Pancreas (tissue), 10 donors: ENCODE measurements at regions of chr11 and their contacts with region 1.

Region 1: GRCh38 chr11:128824191-128825049 is 42.7 kb downstream of the KCNJ1 start:
- DNase-seq: no peak
- ATAC-seq: peak in 1 of 4 donors; percentile 33
- H3K4me3 ChIP-seq: peak overlapping the region in 1 of 4 donors; percentile 23
- H3K27ac ChIP-seq: no peak overlapping the region
- H3K4me1 ChIP-seq: no peaks in the 10 kb centered on the region
- H3K27me3 ChIP-seq: no peaks in the 10 kb centered on the region
- CTCF ChIP-seq: no peak

Region 2: GRCh38 chr11:128172046-128172878 is 652.2 kb before region 1 on chr11:
- intact Hi-C with region 1: loop called in 2 of 3 experiments (anchors 5 to 10 kb)
- DNase-seq: peak; percentile 41 to 80 (median 60)
- ATAC-seq: peak; percentile 82 to 97 (median 94)
- H3K4me3 ChIP-seq: no peak overlapping the region
- H3K27ac ChIP-seq: no peak overlapping the region
- H3K4me1 ChIP-seq: peaks cover 0 to 4% (median 0%) of the 10 kb centered on the region in 3 donors
- H3K27me3 ChIP-seq: peaks cover 0 to 4% (median 0%) of the 10 kb centered on the region in 4 donors
- CTCF ChIP-seq: peak; percentile 29 to 65 (median 58)

Region 3: DNA sequence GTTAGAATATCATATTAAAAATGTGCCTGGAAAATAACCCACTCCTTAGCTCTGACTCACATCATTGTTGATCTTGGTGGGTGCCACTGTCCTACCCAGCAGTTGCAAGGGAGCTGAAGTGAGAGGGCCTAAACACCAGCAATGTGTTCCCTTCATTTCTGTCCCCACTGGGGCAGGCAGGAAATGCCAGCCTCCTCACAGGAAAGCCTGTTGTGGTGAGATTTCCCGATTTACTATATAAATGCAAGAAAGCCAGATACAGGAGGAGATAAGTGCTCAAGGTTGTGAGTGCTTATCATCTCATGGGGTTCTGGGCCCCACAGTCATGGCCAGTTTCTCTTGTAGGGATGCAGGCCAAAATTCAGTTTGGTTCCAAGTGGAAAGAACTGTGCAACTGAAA is 146.4 kb before region 1 on chr11:
- intact Hi-C with region 1: no loop called
- DNase-seq: no peak
- ATAC-seq: no peak
- H3K4me3 ChIP-seq: no peak overlapping the region
- H3K27ac ChIP-seq: no peak overlapping the region
- H3K4me1 ChIP-seq: no peaks in the 10 kb centered on the region
- H3K27me3 ChIP-seq: no peaks in the 10 kb centered on the region
- CTCF ChIP-seq: no peak

Region 4: DNA sequence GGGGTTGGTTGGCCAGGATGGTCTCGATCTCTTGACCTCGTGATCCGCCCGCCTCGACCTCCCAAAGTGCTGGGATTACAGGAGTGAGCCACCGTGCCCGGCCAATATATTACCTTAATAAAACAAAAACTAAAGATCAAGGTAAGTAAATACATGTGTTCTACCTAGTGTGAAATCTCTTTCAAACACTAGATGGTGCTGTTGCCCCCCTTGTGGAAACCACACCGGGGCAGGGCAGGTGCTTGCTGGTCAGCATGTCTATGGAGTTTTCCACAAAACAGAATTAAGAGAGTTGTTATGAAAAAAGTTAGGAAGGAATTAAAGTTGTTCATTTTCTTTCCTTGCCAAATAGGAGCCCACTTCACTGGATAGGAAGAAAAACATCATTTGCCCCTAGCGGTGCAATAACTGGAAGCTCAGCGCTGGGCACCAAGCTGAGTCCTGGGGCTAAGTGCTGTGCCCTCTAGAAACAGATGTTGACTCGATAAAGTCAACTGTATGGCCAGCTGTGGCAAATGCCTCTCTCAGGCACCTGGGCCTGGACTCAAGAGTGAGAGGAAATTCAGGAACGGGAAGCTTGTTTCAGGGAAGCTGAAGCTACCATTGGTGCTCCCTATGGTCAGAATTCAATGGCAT is 60.4 kb after region 1 on chr11:
- intact Hi-C with region 1: no loop called
- DNase-seq: peak in 4 of 6 donors; percentile 60 to 81 (median 68)
- ATAC-seq: peak; percentile 78 to 84 (median 78)
- H3K4me3 ChIP-seq: no peak overlapping the region
- H3K27ac ChIP-seq: no peak overlapping the region
- H3K4me1 ChIP-seq: peaks cover 12 to 28% (median 18%) of the 10 kb centered on the region in 3 donors
- H3K27me3 ChIP-seq: no peaks in the 10 kb centered on the region
- CTCF ChIP-seq: peak; percentile 73 to 89 (median 82)

Region 5: DNA sequence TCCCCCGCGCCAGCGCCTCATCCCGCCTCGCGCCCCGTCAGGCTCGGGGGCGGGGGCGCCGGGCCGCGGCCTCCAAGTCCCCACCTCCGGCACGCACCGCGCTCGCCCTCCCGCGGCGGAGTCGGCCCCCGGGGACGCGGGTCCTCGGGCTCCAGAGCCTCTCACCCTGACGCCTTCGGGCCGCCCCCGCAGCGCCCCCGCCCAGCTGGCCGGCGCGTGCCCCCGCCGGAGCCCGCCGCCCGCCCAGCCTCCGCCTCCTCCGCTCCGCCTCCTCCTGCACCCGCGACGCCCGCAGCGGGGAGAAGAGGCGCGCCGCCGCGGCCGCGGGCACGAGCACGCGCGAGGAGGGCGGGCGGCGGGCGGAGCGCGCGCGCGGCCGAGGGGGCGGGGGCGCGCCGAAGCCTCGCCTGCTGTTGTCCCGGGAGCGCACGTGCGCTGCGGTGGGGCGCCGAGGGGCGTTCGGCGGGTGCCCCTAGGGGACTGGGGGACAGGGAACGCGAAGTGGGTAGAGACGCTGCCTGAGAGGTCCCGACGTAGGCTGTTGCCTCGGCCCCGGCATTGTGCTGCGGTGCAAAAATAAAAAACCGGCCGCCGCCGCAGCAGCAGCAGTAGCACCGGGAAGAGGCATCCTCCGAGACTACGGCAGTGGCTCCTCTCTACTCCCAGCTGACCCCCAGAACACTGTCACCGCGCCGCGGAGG is 455.1 kb after region 1 on chr11:
- intact Hi-C with region 1: no loop called
- DNase-seq: peak; percentile 75 to 95 (median 84)
- ATAC-seq: peak; percentile 80 to 92 (median 87)
- H3K4me3 ChIP-seq: peak overlapping the region; percentile 31 to 62 (median 52)
- H3K27ac ChIP-seq: peak overlapping the region in 2 of 4 donors; percentile 34 to 39
- H3K4me1 ChIP-seq: peaks cover 12 to 44% (median 26%) of the 10 kb centered on the region in 3 donors
- H3K27me3 ChIP-seq: no peaks in the 10 kb centered on the region
- CTCF ChIP-seq: no peak